Mammary epithelial cell (primary cell): ENCODE measurements at regions of chr17 and their contacts with region 1.

Region 1: GRCh38 chr17:62692721-62693483 is 65.4 kb downstream of the MRC2 start:
- DNase-seq: no peak
- H3K4me3 ChIP-seq: no peak overlapping the region
- H3K27ac ChIP-seq: no peak overlapping the region
- H3K4me1 ChIP-seq: peaks cover 45% of the 10 kb centered on the region
- H3K27me3 ChIP-seq: no peaks in the 10 kb centered on the region
- CTCF ChIP-seq: peak; percentile 33 to 53

Region 2: GRCh38 chr17:62656446-62656845 is 36.5 kb before region 1 on chr17:
- CTCF ChIA-PET with region 1: no interaction called
- dilution Hi-C with region 1: loop called (anchors 5 kb)
- in situ Hi-C with region 1: no loop called
- intact Hi-C with region 1: no loop called
- DNase-seq: no peak
- H3K4me3 ChIP-seq: no peak overlapping the region
- H3K27ac ChIP-seq: no peak overlapping the region
- H3K4me1 ChIP-seq: peaks cover 21% of the 10 kb centered on the region
- H3K27me3 ChIP-seq: no peaks in the 10 kb centered on the region
- CTCF ChIP-seq: no peak

Region 3: DNA sequence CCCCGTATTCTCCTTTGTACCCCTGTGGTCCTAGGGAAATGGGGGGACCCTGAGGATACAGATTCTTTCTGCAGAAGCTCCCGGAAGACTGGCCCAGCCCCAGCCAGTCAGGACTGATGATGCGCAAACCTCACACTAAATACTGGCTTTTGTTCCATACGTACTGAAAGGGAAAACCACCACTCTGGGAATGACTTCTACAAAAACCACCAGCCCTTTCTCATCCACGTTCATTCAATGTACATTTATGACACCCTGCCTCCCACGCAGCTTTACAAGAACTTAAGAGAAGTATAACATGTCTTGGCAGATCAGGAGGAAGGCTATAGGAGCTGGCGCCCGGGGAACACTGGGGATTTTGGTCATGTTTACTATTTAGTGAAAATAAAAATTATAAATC is 44.6 kb after region 1 on chr17:
- CTCF ChIA-PET with region 1: no interaction called
- dilution Hi-C with region 1: no loop called
- in situ Hi-C with region 1: no loop called
- intact Hi-C with region 1: no loop called
- DNase-seq: peak; percentile 88
- H3K4me3 ChIP-seq: no peak overlapping the region
- H3K27ac ChIP-seq: peak overlapping the region; percentile 35
- H3K4me1 ChIP-seq: peaks cover 20% of the 10 kb centered on the region
- H3K27me3 ChIP-seq: no peaks in the 10 kb centered on the region
- CTCF ChIP-seq: no peak

Region 4: GRCh38 chr17:63001451-63002312 is 308.8 kb after region 1 on chr17:
- CTCF ChIA-PET with region 1: no interaction called
- dilution Hi-C with region 1: loop called (anchors 10 kb)
- in situ Hi-C with region 1: no loop called
- intact Hi-C with region 1: no loop called
- DNase-seq: peak; percentile 71
- H3K4me3 ChIP-seq: no peak overlapping the region
- H3K27ac ChIP-seq: no peak overlapping the region
- H3K4me1 ChIP-seq: peaks cover 14% of the 10 kb centered on the region
- H3K27me3 ChIP-seq: no peaks in the 10 kb centered on the region
- CTCF ChIP-seq: no peak

Region 5: GRCh38 chr17:63406689-63407330 is 713.9 kb after region 1 on chr17:
- CTCF ChIA-PET with region 1: no interaction called
- dilution Hi-C with region 1: no loop called
- in situ Hi-C with region 1: loop called in 1 of 2 experiments (anchors 25 kb)
- intact Hi-C with region 1: no loop called
- DNase-seq: peak; percentile 77
- H3K4me3 ChIP-seq: no peak overlapping the region
- H3K27ac ChIP-seq: peak overlapping the region; percentile 55
- H3K4me1 ChIP-seq: peaks cover 7% of the 10 kb centered on the region
- H3K27me3 ChIP-seq: no peaks in the 10 kb centered on the region
- CTCF ChIP-seq: peak; percentile 80 to 86